K562 (cell line): ENCODE measurements at regions of chr5 and their contacts with region 1.

Region 1: DNA sequence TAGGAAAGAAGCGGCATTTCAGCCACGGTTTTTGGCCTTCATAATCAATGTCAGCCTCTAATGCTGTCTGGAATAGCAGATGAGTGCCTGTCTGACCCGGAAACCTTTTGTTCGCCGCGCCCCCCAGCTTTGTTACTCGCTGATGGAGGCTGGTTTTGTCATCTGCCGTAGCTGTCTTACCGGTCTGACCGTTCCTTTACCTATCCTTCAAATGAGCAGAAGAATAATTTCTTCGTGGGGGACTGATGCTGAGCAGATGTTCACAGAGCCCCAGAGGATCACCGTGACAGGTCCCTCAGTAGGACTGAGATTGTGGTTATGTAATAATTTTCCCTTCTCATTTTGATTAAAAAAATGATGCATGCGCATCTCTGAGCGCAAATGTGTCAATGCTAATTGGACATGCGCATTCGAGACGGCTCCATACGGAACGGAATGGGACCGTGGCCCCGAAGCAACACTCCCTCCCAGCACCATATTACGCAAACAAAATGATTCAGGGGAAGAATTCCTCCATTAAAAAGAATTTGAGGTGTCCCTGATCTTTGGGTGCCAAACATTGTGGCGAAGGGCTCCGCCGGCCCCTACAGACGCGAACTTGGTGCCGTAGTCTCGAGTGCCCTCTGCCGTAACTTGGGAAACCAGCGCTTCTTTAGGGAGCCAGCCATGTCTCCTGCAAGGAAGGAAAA is 27.6 kb downstream of the TLX3 start:
- DNase-seq: peak in 1 of 4 experiments; percentile 47
- ATAC-seq: peak; percentile 93
- H3K4me3 ChIP-seq: no peak overlapping the region
- H3K27ac ChIP-seq: no peak overlapping the region
- H3K4me1 ChIP-seq: no peaks in the 10 kb centered on the region; a peak in 1 of 5 replicates
- H3K27me3 ChIP-seq: peaks cover 7 to 30% of the 10 kb centered on the region in 2 experiments; a peak in 3 of 5 replicates
- CTCF ChIP-seq: peak; percentile 68 to 71 (median 70)
- EP300 ChIP-seq: no peak
- POLR2A ChIP-seq: no peak
- RAD21 ChIP-seq: peak; percentile 56 to 72

Region 2: GRCh38 chr5:170638454-170639220 is 698.0 kb before region 1 on chr5:
- CTCF ChIA-PET with region 1: interaction called, 3 read pairs
- POLR2A ChIA-PET with region 1: no interaction called
- in situ Hi-C with region 1: no loop called
- intact Hi-C with region 1: loop called (anchors 5 kb)
- DNase-seq: peak; percentile 73 to 88 (median 82)
- ATAC-seq: peak; percentile 96
- H3K4me3 ChIP-seq: no peak overlapping the region
- H3K27ac ChIP-seq: no peak overlapping the region
- H3K4me1 ChIP-seq: peaks cover 3 to 4% of the 10 kb centered on the region in 2 experiments; a peak in 2 of 5 replicates
- H3K27me3 ChIP-seq: peaks cover 0 to 25% of the 10 kb centered on the region in 2 experiments; a peak in 2 of 5 replicates
- CTCF ChIP-seq: peak; percentile 79 to 84 (median 83)
- EP300 ChIP-seq: no peak
- POLR2A ChIP-seq: no peak
- RAD21 ChIP-seq: peak; percentile 60 to 79

Region 3: DNA sequence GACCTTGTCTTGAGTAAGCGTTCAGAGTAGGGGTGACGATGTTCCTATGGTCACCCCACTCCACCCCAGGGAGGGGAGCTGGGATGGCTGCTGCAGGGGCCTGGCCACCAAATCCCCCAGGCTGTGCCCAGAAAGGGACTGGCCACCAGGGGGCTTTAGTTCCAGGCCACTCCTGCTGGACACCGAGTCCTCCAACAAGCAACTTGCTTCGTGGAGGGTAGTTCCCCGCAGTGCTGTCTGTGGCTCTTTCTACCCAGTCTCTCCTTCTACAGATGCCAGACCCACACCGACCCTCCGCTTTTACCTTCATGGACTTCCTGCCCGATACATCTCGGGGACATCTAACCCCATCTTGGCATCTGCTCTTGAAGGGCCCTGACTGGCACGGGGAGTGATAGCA is 588.8 kb before region 1 on chr5:
- CTCF ChIA-PET with region 1: no interaction called
- POLR2A ChIA-PET with region 1: no interaction called
- in situ Hi-C with region 1: loop called (anchors 10 kb)
- intact Hi-C with region 1: no loop called
- DNase-seq: peak; percentile 23 to 39 (median 32)
- ATAC-seq: peak; percentile 67
- H3K4me3 ChIP-seq: no peak overlapping the region
- H3K27ac ChIP-seq: no peak overlapping the region
- H3K4me1 ChIP-seq: peaks cover 0 to 9% of the 10 kb centered on the region in 2 experiments; a peak in 2 of 5 replicates
- H3K27me3 ChIP-seq: peaks cover 2 to 23% of the 10 kb centered on the region in 2 experiments; a peak in 3 of 5 replicates
- CTCF ChIP-seq: peak; percentile 34 to 57 (median 49)
- EP300 ChIP-seq: no peak
- POLR2A ChIP-seq: no peak
- RAD21 ChIP-seq: 0 out of 4 replicates have a peak, but pooled peaks of 1 of the 2 experiments have one; percentile 19

Region 4: DNA sequence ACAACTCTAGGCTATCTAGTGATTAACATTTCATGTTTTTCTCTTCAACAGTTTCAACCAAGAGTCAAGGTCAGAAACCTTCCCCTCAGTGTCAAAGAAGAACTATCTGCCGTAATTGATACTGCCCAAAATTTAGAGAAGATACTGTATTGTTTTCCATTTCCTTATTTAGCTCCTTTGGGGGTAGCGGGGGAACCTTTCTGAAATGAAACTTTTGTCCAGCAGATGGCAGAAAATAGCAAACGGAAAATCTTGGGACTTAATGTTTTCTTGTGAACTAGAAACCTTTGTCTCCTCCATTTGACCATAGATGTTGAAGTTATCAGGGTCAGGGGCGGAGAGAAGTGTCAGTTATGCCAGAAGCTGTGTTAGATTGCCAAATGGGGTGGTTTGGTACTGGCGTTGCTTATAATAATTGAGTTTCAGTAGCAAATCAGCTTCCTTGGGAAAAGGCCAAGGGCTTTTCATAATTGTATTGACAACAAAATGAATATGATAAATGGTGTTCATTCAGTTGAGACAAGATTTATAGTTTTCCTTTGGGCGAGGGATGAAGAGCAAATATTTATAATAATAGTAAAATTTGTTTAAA is 129.3 kb before region 1 on chr5:
- CTCF ChIA-PET with region 1: interaction called, 5 read pairs
- POLR2A ChIA-PET with region 1: no interaction called
- in situ Hi-C with region 1: no loop called
- intact Hi-C with region 1: loop called (anchors 1 kb)
- DNase-seq: peak; percentile 30 to 48 (median 33)
- ATAC-seq: peak; percentile 76
- H3K4me3 ChIP-seq: no peak overlapping the region
- H3K27ac ChIP-seq: no peak overlapping the region
- H3K4me1 ChIP-seq: no peaks in the 10 kb centered on the region
- H3K27me3 ChIP-seq: no peaks in the 10 kb centered on the region
- CTCF ChIP-seq: peak; percentile 50 to 60 (median 52); a peak in 4 of 6 replicates
- EP300 ChIP-seq: no peak
- POLR2A ChIP-seq: no peak
- RAD21 ChIP-seq: peak; percentile 54 to 65

Region 5: GRCh38 chr5:171272996-171273970 is 63.4 kb before region 1 on chr5:
- CTCF ChIA-PET with region 1: no interaction called
- POLR2A ChIA-PET with region 1: interaction called, 3 read pairs
- in situ Hi-C with region 1: no loop called
- intact Hi-C with region 1: loop called (anchors 2 kb)
- DNase-seq: peak; percentile 13 to 34 (median 15)
- ATAC-seq: peak; percentile 85
- H3K4me3 ChIP-seq: no peak overlapping the region
- H3K27ac ChIP-seq: no peak overlapping the region
- H3K4me1 ChIP-seq: no peaks in the 10 kb centered on the region
- H3K27me3 ChIP-seq: no peaks in the 10 kb centered on the region
- CTCF ChIP-seq: peak in 2 of 3 experiments; percentile 43 to 58; a peak in 4 of 6 replicates
- EP300 ChIP-seq: no peak
- POLR2A ChIP-seq: no peak
- RAD21 ChIP-seq: peak; percentile 26 to 51; a peak in 3 of 4 replicates